ENCODE measurements at regions of chr3 and their contacts with region 1.

Region 1: GRCh38 chr3:97882975-97883598 is 61.3 kb downstream of the CRYBG3 start:
- DNase-seq: no peak
- H3K4me3 ChIP-seq: no peak overlapping the region
- H3K27ac ChIP-seq: peak overlapping the region; percentile 9
- H3K4me1 ChIP-seq: peaks cover 16% of the 10 kb centered on the region
- H3K27me3 ChIP-seq: no peaks in the 10 kb centered on the region
- CTCF ChIP-seq: no peak
- POLR2A ChIP-seq: no peak

Region 2: DNA sequence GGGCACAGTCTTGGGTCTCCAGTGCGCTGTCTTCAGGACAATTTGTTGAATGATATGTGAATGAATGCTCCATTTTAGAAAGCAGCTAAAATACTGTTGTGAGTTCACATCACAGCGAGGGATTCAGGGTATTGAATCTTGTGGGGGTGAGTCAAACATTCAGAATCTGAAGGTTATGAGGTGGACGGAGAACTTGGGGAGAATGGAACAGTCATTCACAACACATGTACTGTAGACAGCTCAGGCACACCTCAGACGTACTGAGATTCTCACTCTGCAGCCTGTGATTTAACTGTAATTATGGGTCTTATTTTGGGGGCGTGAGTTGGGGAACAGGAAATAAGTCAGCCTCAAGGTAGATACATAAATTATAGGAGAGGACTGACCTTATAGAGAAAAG is 47.3 kb before region 1 on chr3:
- intact Hi-C with region 1: loop called (anchors 1 kb)
- DNase-seq: no peak
- H3K4me3 ChIP-seq: no peak overlapping the region
- H3K27ac ChIP-seq: no peak overlapping the region
- H3K4me1 ChIP-seq: peaks cover 24% of the 10 kb centered on the region
- H3K27me3 ChIP-seq: no peaks in the 10 kb centered on the region
- CTCF ChIP-seq: no peak
- POLR2A ChIP-seq: no peak

Measured in vagina (tissue), 2 donors.